HEK293T (cell line): ENCODE measurements at regions of chr3 and their contacts with region 1.

Region 1: GRCh38 chr3:52407779-52408178 is 37.1 kb downstream of the SEMA3G start:
- DNase-seq: no peak

Region 2: GRCh38 chr3:52384019-52384761 is 23.6 kb before region 1 on chr3:
- CTCF ChIA-PET with region 1: interaction called, 10 read pairs
- POLR2A ChIA-PET with region 1: interaction called, 3 read pairs
- DNase-seq: no peak

Region 3: GRCh38 chr3:52444860-52445793 is 37.3 kb after region 1 on chr3 and contains the start of gene SEMA3G:
- CTCF ChIA-PET with region 1: interaction called, 18 read pairs
- POLR2A ChIA-PET with region 1: no interaction called
- DNase-seq: peak; percentile 85

Region 4: DNA sequence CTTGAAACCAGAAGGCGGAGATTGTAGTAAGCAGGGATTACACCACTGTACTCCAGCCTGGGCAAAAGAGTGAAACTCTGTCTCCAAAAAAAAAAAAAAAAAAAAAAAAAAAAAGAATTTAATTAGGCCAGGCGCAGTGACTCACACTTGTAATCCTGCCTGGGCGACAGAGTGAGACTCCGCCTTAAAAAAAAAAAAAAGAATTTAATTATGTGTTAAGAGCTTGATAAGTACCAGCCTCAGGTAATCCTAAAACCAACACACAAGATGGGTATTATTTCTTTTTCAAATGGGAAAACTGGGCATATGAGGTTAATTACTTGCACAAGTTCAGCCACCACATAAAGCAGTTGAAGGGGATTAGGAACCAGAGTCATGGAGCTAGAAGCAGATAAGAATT is 228.9 kb after region 1 on chr3:
- CTCF ChIA-PET with region 1: no interaction called
- POLR2A ChIA-PET with region 1: no interaction called
- DNase-seq: no peak